Naive thymus-derived CD8-positive, alpha-beta T cell (primary cell): ENCODE measurements at regions of chr1 and their contacts with region 1.

Region 1: GRCh38 chr1:223712194-223712849 is at the start of gene CAPN2:
- DNase-seq: peak in 8 of 10 donors; percentile 22 to 59 (median 52)
- ATAC-seq: peak; percentile 61 to 67
- H3K4me3 Mint-ChIP-seq: peak within 1 kb of the TSS; percentile 66 to 90 (median 86)
- H3K27ac Mint-ChIP-seq: peak within 1 kb of the TSS; percentile 88 to 97 (median 92)
- H3K4me1 Mint-ChIP-seq: peaks cover 29 to 61% (median 60%) of the 10 kb centered on the region in 4 donors
- H3K27me3 Mint-ChIP-seq: peaks cover 0 to 1% (median 0%) of the 10 kb centered on the region in 5 donors
- polyA plus RNA-seq, gene CAPN2: 68.6 to 101 (median 83.7) TPM

Region 2: GRCh38 chr1:223748773-223749733 is 36.7 kb after region 1 on chr1:
- POLR2A ChIA-PET with region 1: interaction called, 22 read pairs
- DNase-seq: peak; percentile 39 to 75 (median 66)
- ATAC-seq: peak; percentile 91 to 96
- H3K4me3 Mint-ChIP-seq: peak overlapping the region; percentile 71 to 87 (median 79)
- H3K27ac Mint-ChIP-seq: peak overlapping the region in 5 of 10 donors; percentile 44 to 85 (median 61)
- H3K4me1 Mint-ChIP-seq: peaks cover 6 to 17% (median 7%) of the 10 kb centered on the region in 4 donors
- H3K27me3 Mint-ChIP-seq: no peaks in the 10 kb centered on the region

Region 3: GRCh38 chr1:223819730-223820514 is 107.6 kb after region 1 on chr1:
- POLR2A ChIA-PET with region 1: no interaction called
- DNase-seq: no peak
- ATAC-seq: no peak
- H3K4me3 Mint-ChIP-seq: no peak overlapping the region
- H3K27ac Mint-ChIP-seq: peak overlapping the region in 3 of 10 donors; percentile 35 to 61 (median 46)
- H3K4me1 Mint-ChIP-seq: peaks cover 26 to 35% (median 30%) of the 10 kb centered on the region in 4 donors
- H3K27me3 Mint-ChIP-seq: no peaks in the 10 kb centered on the region